ENCODE measurements at regions of chr5 and their contacts with region 1.

Region 1: DNA sequence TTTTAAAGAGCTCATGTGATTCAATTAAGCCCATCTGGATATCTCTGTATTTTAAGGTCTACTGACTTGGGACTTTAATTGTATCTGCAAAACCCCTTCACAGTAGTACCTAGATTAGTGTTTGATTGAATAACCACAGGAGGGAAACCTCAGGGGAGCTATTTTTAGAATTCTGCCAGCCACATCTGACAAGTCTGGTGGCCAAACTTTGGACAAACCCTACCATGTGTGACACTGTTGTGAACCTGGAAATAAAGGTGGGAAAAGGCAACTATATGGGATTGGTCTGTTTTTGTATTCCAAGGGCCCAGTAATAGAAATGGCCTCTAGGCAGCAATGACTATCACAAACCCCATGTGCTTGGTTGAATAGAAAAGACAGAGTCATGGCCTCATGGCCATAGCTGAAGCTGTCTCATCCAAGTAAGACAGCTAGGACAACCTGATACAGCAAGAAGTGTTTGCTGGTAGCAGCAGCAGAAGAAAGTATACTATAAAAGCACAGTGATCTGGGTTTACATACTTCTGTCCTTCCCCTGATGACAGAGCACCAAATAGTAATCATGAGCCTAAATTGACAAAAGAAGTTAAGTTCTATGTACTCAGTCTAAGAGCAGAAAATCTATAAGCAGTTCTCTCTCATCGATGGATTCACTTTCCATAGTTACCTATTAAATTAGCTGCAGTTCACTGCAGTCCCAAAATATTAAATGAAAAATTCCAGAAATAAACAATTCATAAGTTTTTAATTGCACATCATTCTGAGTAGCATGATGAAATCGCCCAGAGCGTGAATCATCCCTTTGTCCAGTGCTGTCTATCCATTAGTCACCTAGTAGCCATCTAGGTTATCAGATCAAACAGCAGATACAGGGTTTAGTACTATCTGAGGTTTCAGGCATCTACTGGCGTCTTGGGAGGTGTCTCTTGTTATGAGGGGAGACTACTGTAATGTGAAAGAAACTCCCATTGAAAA is 189.8 kb downstream of the ARHGAP26 start:
- DNase-seq: peak; percentile 37 to 84
- H3K4me3 ChIP-seq: no peak overlapping the region
- H3K27ac ChIP-seq: peak overlapping the region; percentile 86
- H3K4me1 ChIP-seq: peaks cover 37% of the 10 kb centered on the region
- H3K27me3 ChIP-seq: no peaks in the 10 kb centered on the region
- CTCF ChIP-seq: no peak

Region 2: GRCh38 chr5:143041972-143042770 is 82.2 kb after region 1 on chr5:
- CTCF ChIA-PET with region 1: interaction called, 15 read pairs
- POLR2A ChIA-PET with region 1: no interaction called
- intact Hi-C with region 1: no loop called
- DNase-seq: no peak
- H3K4me3 ChIP-seq: no peak overlapping the region
- H3K27ac ChIP-seq: no peak overlapping the region
- H3K4me1 ChIP-seq: no peaks in the 10 kb centered on the region
- H3K27me3 ChIP-seq: no peaks in the 10 kb centered on the region
- CTCF ChIP-seq: no peak

Measured in PC-9 (cell line).